CD14-positive monocyte (primary cell): ENCODE measurements at regions of chr16 and their contacts with region 1.

Region 1: DNA sequence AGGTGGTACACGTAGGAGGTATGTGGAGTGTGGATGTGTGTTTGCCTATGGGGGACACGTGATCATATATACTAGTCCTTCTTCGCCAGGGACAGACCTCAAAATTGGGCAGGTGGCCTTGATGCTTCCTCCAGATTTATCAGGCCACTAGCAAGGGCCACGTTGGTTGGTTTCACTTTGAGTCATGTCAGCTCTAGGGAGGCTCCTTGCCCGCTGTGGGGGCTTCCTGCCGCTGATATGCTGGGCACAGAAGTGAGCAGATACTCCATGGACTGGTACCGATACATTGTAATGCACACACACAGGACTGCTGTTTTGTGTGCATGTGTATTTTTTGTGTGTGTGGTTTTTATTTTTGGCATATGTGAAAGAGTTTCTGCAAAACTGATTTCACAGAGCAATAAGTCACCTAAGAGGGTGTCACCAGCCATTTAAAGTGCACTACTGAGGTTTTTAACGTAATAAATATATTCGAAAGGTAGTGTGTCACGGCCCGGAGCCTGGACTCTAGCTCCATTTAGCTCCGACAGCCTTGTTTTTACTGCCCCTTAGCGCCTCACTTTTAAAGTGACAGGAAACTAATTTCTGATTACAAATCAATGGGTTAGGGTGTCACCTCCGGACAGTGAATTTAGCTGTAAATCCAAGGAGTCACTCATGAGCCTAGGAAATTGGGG is 605.5 kb upstream of the SALL1 start:
- DNase-seq: no peak
- H3K4me3 ChIP-seq: no peak overlapping the region
- H3K4me3 Mint-ChIP-seq: no peak overlapping the region
- H3K27ac ChIP-seq: no peak overlapping the region
- H3K27ac Mint-ChIP-seq: peak overlapping the region in 1 of 7 donors; percentile 3
- H3K4me1 ChIP-seq: no peaks in the 10 kb centered on the region
- H3K4me1 Mint-ChIP-seq: no peaks in the 10 kb centered on the region
- H3K27me3 ChIP-seq: no peaks in the 10 kb centered on the region
- H3K27me3 Mint-ChIP-seq: peaks cover 6 to 9% (median 8%) of the 10 kb centered on the region in 3 donors
- CTCF ChIP-seq: no peak

Region 2: DNA sequence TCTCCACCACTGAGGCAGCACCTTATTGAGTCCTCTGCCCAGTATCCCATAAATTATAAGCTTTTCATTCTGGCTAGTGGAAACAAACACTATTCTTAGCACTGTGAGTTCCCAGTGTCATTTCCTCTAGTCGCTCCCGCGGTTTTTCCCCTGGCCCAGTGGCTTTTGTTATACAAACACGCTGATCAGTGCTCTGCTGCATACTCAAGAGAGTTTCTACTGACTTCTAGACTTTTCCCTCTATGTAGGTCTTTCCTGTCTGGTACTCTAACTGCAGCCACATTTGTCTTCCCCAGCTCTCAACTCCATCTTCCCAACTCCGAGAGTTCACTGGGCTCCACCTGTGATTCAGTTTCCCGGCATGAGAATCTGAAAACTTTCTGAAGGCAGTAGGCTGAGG is 48.9 kb before region 1 on chr16:
- intact Hi-C with region 1: loop called in 1 of 2 experiments (anchors 5 kb)
- DNase-seq: no peak
- H3K4me3 ChIP-seq: no peak overlapping the region
- H3K4me3 Mint-ChIP-seq: no peak overlapping the region
- H3K27ac ChIP-seq: no peak overlapping the region
- H3K27ac Mint-ChIP-seq: no peak overlapping the region
- H3K4me1 ChIP-seq: no peaks in the 10 kb centered on the region
- H3K4me1 Mint-ChIP-seq: no peaks in the 10 kb centered on the region
- H3K27me3 ChIP-seq: no peaks in the 10 kb centered on the region
- H3K27me3 Mint-ChIP-seq: peaks cover 0 to 3% (median 0%) of the 10 kb centered on the region in 3 donors
- CTCF ChIP-seq: no peak

Region 3: GRCh38 chr16:51919736-51920135 is 163.2 kb after region 1 on chr16:
- intact Hi-C with region 1: no loop called
- DNase-seq: no peak
- H3K4me3 ChIP-seq: no peak overlapping the region
- H3K4me3 Mint-ChIP-seq: no peak overlapping the region
- H3K27ac ChIP-seq: no peak overlapping the region
- H3K27ac Mint-ChIP-seq: peak overlapping the region in 1 of 7 donors; percentile 6
- H3K4me1 ChIP-seq: no peaks in the 10 kb centered on the region
- H3K4me1 Mint-ChIP-seq: no peaks in the 10 kb centered on the region
- H3K27me3 ChIP-seq: no peaks in the 10 kb centered on the region
- H3K27me3 Mint-ChIP-seq: peaks cover 0 to 2% (median 1%) of the 10 kb centered on the region in 3 donors
- CTCF ChIP-seq: no peak